ENCODE measurements at regions of chr13 and their contacts with region 1.

Region 1: DNA sequence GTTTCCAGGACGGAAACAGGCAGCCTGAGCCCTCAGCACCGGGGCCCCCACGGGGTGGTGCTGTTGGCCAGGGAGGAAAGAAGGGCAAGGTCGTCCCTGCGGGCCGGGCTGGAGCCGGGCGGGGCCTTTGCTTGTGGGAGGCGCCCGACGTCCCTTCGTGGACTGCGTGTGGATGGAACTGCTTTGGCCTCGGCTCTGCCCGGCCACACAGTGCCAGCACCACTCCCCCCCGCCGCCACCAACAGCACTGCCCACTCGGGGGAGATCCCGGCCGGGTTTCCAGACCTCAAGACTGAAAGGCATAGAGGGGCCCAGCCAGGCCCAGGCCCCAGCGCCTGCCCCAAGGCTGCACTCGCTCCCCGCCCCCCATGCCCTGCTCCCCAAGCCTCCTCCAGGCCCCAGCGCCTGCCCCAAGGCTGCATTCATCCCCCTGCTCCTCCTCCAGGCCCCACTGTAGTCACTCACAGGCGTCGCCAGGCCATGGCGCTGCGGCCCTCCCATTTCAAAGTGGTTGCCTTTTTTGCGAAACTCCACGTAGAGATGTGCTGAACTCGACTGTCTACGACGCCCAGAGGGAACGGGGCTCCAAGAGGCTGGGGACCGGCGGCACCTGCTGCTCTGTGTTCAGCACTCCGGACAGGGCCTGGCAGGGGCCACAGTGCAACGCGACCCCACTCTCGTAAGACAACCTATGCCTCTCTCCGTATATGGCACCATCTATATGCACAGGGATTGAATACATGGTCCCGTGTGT is 22.5 kb downstream of the C13orf46 start:
- DNase-seq: peak; percentile 87 to 92 (median 88)
- ATAC-seq: peak; percentile 93 to 96 (median 95)
- H3K4me3 ChIP-seq: no peak overlapping the region
- H3K27ac ChIP-seq: peak overlapping the region in 1 of 3 donors; percentile 45
- H3K4me1 ChIP-seq: peaks cover 0 to 9% (median 4%) of the 10 kb centered on the region in 4 donors
- H3K27me3 ChIP-seq: no peaks in the 10 kb centered on the region
- CTCF ChIP-seq: peak; percentile 77 to 89 (median 80)
- POLR2A ChIP-seq: no peak

Region 2: DNA sequence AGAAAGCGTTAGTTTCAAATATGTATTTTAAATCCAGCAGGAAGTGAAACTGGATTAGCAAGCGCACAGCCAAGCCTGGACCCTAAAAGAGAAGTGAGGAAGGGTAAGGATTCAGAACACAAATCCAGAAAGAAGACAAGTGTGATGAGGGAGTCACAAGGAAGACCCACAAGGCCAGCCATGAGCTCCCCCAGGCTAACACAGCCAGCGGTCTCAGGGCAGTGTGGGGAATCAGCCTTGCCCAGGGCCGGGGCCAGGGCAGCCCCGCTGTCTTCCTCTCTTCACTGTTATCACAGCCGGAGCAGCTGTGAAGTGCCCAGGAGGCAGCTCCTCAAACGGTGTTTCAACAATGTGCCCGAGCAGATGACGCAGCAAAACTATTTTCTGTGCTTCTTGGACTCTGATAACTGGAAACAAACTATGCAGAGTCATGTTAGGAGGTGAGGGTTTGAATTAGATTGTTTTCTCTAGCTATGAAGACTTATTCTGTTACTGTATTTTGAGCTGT is 271.1 kb after region 1 on chr13:
- intact Hi-C with region 1: loop called (anchors 2 to 5 kb)
- DNase-seq: no peak
- ATAC-seq: peak in 3 of 4 donors; percentile 5 to 42 (median 33)
- H3K4me3 ChIP-seq: no peak overlapping the region
- H3K27ac ChIP-seq: no peak overlapping the region
- H3K4me1 ChIP-seq: peaks cover 0 to 8% (median 2%) of the 10 kb centered on the region in 4 donors
- H3K27me3 ChIP-seq: no peaks in the 10 kb centered on the region
- CTCF ChIP-seq: no peak
- POLR2A ChIP-seq: no peak